ENCODE measurements at regions of chr2 and their contacts with region 1.

Region 1: GRCh38 chr2:207625018-207625907 is at the start of gene METTL21A:
- DNase-seq: peak; percentile 86
- ATAC-seq: peak; percentile 92
- H3K4me3 ChIP-seq: peak within 1 kb of the TSS; percentile 88
- H3K27ac ChIP-seq: peak within 1 kb of the TSS; percentile 98
- H3K4me1 ChIP-seq: peaks cover 6% of the 10 kb centered on the region; the same call in 1 of the 2 replicates
- H3K27me3 ChIP-seq: no peaks in the 10 kb centered on the region
- CTCF ChIP-seq: peak; percentile 43
- POLR2A ChIP-seq: peak; percentile 89
- RAD21 ChIP-seq: no peak; the same call in 1 of the 2 replicates
- total RNA-seq, gene METTL21A: 5.9 and 11.4 TPM in 2 replicates

Region 2: GRCh38 chr2:207141386-207141785 is 483.9 kb before region 1 on chr2:
- CTCF ChIA-PET with region 1: no interaction called
- POLR2A ChIA-PET with region 1: no interaction called
- dilution Hi-C with region 1: no loop called
- in situ Hi-C with region 1: no loop called
- intact Hi-C with region 1: no loop called
- DNase-seq: no peak
- ATAC-seq: no peak
- H3K4me3 ChIP-seq: no peak overlapping the region
- H3K27ac ChIP-seq: no peak overlapping the region
- H3K4me1 ChIP-seq: peaks cover 22% of the 10 kb centered on the region
- H3K27me3 ChIP-seq: no peaks in the 10 kb centered on the region
- CTCF ChIP-seq: no peak
- POLR2A ChIP-seq: no peak
- RAD21 ChIP-seq: no peak

Region 3: DNA sequence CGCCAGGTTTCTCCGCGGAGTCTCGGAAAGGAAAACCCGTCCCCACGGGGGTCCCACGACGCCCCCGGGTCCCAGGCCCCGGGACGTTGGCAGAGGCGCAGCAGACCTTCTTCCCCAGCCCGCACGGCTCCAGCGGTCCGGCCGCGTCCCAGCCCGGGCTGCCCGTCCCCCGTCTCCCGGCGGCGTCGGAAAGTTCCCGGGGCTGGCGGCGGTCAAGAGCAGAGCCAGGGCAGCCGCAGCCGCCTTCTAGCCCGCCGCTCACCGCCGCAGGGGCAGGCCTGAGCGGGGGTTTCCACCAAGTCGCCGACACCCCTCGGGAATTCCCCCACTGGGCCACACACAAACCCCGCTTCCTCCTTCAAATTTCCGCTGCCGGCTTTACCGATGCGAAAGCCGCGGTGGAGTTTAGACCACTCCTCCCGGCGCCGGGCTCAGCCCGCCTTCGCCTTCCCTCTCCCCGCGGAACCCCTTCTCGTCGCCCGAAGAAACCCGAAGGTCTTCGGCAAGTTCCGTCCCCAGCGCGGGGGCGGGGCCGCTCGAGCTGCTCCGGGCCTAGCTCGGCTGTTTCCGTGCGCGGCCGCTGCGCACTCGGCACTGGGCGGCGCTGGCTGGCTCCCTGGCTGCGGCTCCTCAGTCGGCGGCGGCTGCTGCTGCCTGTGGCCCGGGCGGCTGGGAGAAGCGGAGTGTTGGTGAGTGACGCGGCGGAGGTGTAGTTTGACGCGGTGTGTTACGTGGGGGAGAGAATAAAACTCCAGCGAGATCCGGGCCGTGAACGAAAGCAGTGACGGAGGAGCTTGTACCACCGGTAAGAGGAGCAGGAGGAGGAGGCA is 95.7 kb before region 1 on chr2 and contains the start of gene CREB1:
- CTCF ChIA-PET with region 1: interaction called, 5 read pairs
- POLR2A ChIA-PET with region 1: interaction called, 3 read pairs
- dilution Hi-C with region 1: no loop called
- in situ Hi-C with region 1: no loop called
- intact Hi-C with region 1: loop called (anchors 2 kb)
- DNase-seq: peak; percentile 98
- ATAC-seq: peak; percentile 94
- H3K4me3 ChIP-seq: peak within 1 kb of the TSS; percentile 100
- H3K27ac ChIP-seq: peak within 1 kb of the TSS; percentile 98
- H3K4me1 ChIP-seq: no peaks in the 10 kb centered on the region
- H3K27me3 ChIP-seq: no peaks in the 10 kb centered on the region
- CTCF ChIP-seq: peak; percentile 40
- POLR2A ChIP-seq: peak; percentile 98
- RAD21 ChIP-seq: peak; percentile 39
- total RNA-seq, gene CREB1: 71.9 and 94.5 TPM in 2 replicates

Region 4: GRCh38 chr2:207540431-207540830 is 84.8 kb before region 1 on chr2:
- CTCF ChIA-PET with region 1: no interaction called
- POLR2A ChIA-PET with region 1: no interaction called
- dilution Hi-C with region 1: no loop called
- in situ Hi-C with region 1: no loop called
- intact Hi-C with region 1: no loop called
- DNase-seq: no peak
- ATAC-seq: no peak
- H3K4me3 ChIP-seq: no peak overlapping the region
- H3K27ac ChIP-seq: no peak overlapping the region
- H3K4me1 ChIP-seq: no peaks in the 10 kb centered on the region
- H3K27me3 ChIP-seq: no peaks in the 10 kb centered on the region
- CTCF ChIP-seq: no peak
- POLR2A ChIP-seq: no peak
- RAD21 ChIP-seq: no peak

Region 5: DNA sequence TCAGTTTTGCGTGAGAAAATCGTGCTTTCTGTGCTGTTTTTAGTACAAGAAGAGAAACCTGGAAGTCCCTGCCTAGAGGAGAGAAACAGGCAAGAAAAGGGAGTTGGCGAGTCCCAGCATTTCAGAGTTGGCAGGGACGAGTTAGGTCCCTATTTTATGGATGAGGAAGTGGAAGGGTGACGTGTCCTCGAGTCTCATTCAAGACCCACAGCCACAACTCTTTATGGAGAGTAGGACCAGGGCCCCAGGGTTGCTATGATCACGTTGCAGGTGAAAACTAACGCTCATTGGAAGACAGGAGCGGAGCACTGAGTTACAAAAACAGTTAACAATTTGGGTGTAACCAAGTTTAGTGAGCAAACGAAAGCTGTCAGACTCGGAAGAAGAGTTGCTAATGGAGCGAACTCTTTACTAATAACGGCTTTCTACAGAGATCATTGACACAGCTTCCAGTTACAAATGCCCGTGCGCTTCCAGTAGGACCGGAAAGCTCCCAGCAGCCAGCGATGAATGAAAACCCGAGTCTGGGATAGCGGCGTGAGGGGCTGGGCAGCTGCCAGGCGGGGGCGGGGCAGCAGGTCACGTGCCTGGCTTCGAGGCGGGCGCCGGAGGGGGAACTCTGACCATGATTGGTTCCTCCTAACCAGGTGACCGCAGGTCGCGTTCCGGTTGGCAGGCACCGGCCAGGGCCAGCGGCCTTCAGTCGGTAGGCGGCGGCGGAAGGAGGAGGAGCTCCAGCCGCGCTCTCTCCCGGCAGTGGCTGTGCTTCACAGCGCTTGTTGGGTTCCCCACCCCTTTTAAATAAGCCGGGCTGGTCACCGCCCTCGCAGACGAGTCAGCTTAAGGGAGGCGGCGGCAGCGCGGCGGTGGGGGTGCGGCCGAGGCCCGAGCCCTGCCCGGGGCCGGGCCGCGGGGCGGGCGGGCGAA is 85.8 kb after region 1 on chr2 and contains the start of gene CCNYL1:
- CTCF ChIA-PET with region 1: interaction called, 3 read pairs
- POLR2A ChIA-PET with region 1: interaction called, 4 read pairs
- dilution Hi-C with region 1: no loop called
- in situ Hi-C with region 1: no loop called
- intact Hi-C with region 1: loop called (anchors 2 kb)
- DNase-seq: peak; percentile 99
- ATAC-seq: peak; percentile 98
- H3K4me3 ChIP-seq: peak within 1 kb of the TSS; percentile 87
- H3K27ac ChIP-seq: peak within 1 kb of the TSS; percentile 75
- H3K4me1 ChIP-seq: no peaks in the 10 kb centered on the region
- H3K27me3 ChIP-seq: no peaks in the 10 kb centered on the region
- CTCF ChIP-seq: 0 out of 2 replicates have a peak, but pooled peaks have one; percentile 10
- POLR2A ChIP-seq: peak; percentile 90
- RAD21 ChIP-seq: no peak
- total RNA-seq, gene CCNYL1: 5.4 and 6.7 TPM in 2 replicates

Region 6: GRCh38 chr2:207734264-207734635 is 109.0 kb after region 1 on chr2:
- CTCF ChIA-PET with region 1: interaction called, 13 read pairs
- POLR2A ChIA-PET with region 1: no interaction called
- dilution Hi-C with region 1: no loop called
- in situ Hi-C with region 1: no loop called
- intact Hi-C with region 1: loop called (anchors 1 kb)
- DNase-seq: peak; percentile 61
- ATAC-seq: peak; percentile 88
- H3K4me3 ChIP-seq: no peak overlapping the region
- H3K27ac ChIP-seq: no peak overlapping the region
- H3K4me1 ChIP-seq: no peaks in the 10 kb centered on the region
- H3K27me3 ChIP-seq: no peaks in the 10 kb centered on the region
- CTCF ChIP-seq: peak; percentile 53
- POLR2A ChIP-seq: no peak
- RAD21 ChIP-seq: peak; percentile 61

Region 7: DNA sequence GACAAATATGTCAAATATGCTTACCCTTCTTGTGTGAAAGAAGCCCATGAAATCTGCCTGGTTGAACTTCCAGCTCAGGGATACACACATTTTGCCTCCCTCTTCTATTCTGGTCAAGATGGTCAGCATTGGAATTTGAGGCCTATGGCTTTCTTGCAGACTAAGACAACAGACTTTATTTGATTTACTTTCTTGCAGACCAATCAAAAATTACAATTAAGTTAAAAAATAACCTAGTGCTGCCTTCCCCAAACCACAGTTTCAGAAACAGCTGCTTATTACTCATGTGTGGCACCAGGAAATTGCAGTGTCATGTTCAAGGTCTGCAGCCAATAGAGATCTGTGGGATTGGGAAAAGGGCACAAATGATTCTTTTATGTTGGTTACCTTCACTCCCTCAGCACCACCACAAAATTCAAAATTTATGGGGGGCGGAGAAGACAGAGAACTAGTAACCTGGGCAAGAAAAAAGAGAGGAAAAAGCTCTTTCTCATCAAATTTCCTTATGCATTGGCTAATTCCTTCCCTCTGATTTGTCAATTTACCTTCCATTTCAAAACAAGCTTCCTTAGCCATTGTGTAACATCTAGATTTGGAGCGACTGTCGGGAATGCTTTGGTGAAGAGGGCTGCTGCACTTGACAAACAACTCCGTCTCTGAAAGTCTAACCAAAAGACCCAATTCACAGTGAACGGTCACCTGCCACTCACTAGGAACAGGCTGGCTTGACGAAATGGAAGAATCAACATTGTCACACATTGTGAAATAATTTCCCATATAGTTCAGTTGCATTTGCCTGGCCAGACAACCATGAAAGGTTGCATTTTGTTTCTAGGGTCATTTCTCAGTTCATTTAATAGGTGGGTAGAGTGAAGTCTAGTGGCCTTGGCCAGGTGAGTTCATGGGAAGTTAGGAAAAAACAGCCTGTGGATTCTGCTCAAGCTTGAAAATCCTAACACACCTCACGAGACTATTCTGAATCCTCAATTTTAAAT is 244.8 kb after region 1 on chr2:
- CTCF ChIA-PET with region 1: no interaction called
- POLR2A ChIA-PET with region 1: no interaction called
- dilution Hi-C with region 1: no loop called
- in situ Hi-C with region 1: no loop called
- intact Hi-C with region 1: no loop called
- DNase-seq: peak; percentile 83
- ATAC-seq: peak; percentile 85
- H3K4me3 ChIP-seq: no peak overlapping the region
- H3K27ac ChIP-seq: no peak overlapping the region
- H3K4me1 ChIP-seq: peaks cover 4% of the 10 kb centered on the region; the same call in 1 of the 2 replicates
- H3K27me3 ChIP-seq: no peaks in the 10 kb centered on the region
- CTCF ChIP-seq: no peak
- POLR2A ChIP-seq: no peak
- RAD21 ChIP-seq: no peak

Region 8: DNA sequence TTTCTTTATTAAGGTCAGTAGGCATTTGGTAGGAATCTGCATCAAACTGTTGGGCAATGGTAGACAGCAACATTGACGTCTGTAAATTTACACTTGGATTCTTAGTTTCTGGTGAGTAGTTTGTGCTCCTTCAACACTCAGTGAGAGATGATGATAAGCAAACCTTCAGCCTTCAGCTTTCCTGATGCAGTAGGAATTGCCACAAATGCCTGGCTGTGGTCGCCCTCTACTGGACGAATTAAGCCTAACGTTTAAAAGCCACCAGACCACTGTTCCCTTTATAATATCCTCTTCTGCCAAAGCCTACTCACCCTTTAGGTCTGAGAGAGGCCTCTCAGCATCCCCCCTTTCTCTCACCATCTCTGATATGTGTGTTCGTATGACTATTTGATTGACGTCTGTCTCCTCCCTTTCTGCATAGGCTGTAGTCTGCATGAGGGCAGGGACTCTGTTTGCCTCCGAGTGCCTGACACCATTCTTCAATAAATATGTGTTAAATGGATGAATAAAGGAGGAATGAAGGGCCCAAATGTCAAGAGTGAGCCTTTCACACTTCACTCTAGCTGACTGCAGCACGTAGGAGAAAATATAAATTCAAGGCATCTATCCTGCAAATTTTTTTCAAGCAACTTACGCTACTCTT is 447.1 kb after region 1 on chr2:
- CTCF ChIA-PET with region 1: no interaction called
- POLR2A ChIA-PET with region 1: no interaction called
- dilution Hi-C with region 1: no loop called
- in situ Hi-C with region 1: loop called (anchors 25 kb)
- intact Hi-C with region 1: loop called (anchors 2 kb)
- DNase-seq: peak; percentile 72
- ATAC-seq: peak; percentile 93
- H3K4me3 ChIP-seq: no peak overlapping the region
- H3K27ac ChIP-seq: no peak overlapping the region
- H3K4me1 ChIP-seq: no peaks in the 10 kb centered on the region
- H3K27me3 ChIP-seq: peaks cover 5% of the 10 kb centered on the region
- CTCF ChIP-seq: peak; percentile 85
- POLR2A ChIP-seq: 0 out of 2 replicates have a peak, but pooled peaks have one; percentile 42
- RAD21 ChIP-seq: peak; percentile 98

Region 9: DNA sequence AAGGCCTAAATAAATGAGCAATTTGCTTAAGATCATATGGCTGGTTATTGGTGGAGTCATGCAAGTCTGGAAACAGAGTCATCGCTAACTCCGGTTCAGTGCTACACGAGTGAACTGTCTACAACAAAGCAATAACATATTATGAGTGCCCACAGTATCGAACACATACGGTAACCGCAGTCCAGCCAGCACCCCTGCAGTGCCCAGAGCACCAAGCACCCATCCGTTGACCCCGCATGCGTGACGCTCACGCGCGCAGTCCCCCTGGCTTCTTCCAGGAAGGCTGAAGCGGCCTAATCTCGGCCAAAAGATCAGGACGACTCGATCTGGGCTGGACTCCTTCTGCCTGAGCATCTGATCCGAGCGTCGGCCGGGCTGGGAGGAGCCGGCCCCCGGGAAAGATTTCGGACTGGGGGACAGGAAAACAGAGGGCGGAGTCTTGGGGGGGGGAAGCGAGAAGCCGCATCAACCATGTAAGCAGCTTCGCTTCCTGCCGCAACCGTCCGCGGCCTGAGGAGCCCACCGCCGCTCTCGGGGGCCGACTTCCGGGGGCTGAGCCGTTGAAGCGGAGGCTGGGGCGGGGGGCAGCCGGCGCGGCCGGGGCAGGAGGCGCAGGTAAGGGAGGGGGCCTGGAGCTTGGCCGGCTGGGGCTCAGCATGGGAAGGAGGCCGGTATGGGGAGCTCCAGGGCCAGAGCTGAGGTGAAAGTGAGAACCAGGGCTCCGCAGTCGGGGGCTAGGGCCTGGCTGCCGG is 640.7 kb after region 1 on chr2 and contains the start of gene PIKFYVE:
- CTCF ChIA-PET with region 1: no interaction called
- POLR2A ChIA-PET with region 1: no interaction called
- dilution Hi-C with region 1: no loop called
- in situ Hi-C with region 1: no loop called
- intact Hi-C with region 1: loop called (anchors 1 kb)
- DNase-seq: peak; percentile 98
- ATAC-seq: peak; percentile 98
- H3K4me3 ChIP-seq: peak within 1 kb of the TSS; percentile 98
- H3K27ac ChIP-seq: peak within 1 kb of the TSS; percentile 65
- H3K4me1 ChIP-seq: peaks cover 5% of the 10 kb centered on the region; the same call in 1 of the 2 replicates
- H3K27me3 ChIP-seq: no peaks in the 10 kb centered on the region
- CTCF ChIP-seq: no peak
- POLR2A ChIP-seq: peak; percentile 83
- RAD21 ChIP-seq: no peak
- total RNA-seq, gene PIKFYVE: 31.4 and 34.6 TPM in 2 replicates